ENCODE measurements at regions of chr2 and their contacts with region 1.

Region 1: DNA sequence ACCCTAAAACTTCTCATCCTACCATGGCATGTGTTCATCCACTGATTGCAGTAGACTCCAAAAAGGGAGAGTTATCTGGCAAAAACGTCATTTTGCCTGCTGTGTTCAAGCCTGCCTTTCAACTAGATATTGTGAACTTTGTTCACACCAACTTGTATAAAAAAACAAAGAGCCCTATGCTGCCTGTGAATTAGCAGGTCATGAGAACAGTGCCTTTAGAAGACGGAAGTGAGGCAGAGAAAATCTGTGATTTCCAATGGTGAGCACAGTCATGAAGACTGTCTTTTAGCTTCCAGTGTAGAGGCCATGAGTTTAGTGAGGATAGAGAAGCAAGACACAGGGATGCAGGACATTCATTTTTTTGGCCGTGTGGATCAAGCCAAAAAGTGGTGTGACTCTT is 103.6 kb upstream of the PGAP1 start:
- DNase-seq: no peak
- H3K4me3 ChIP-seq: no peak overlapping the region
- H3K27ac ChIP-seq: no peak overlapping the region
- H3K4me1 ChIP-seq: no peaks in the 10 kb centered on the region
- H3K27me3 ChIP-seq: no peaks in the 10 kb centered on the region
- CTCF ChIP-seq: no peak
- POLR2A ChIP-seq: no peak

Region 2: DNA sequence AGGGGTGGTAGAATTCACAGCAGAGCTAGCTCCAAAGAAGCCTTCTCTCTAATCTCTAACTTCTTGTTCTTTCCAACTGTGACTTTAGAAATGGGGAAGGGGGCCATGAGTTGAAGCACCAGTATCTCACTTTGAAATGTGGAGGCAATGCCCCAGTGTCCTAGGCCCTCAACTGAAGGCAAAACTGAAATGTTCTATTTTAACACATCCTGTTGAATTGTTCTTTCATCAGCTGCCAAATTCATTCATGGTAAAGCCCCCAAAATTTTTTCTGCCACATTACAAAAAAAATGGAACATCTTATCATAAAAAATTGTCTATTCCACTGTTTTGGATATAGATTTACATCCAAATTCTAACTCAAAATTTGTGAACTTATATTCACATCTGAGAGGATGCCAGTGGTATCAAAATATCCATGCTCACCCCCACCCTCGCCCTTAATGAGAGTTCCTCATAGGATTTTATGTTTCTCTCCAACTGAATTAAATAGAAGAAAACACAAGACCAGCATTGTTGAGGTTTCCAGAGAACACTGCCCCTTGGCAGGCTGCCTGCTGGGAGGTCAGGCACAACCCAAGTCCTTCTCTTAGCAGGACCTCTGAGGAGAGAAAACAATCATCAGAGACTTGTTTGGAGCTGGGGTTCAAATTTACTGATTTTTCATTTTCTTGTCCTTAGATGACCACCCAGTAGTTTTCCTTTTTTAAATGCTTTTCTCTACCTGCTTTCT is 43.8 kb after region 1 on chr2:
- intact Hi-C with region 1: loop called (anchors 1 kb)
- DNase-seq: peak in 1 of 2 donors; percentile 20
- H3K4me3 ChIP-seq: no peak overlapping the region
- H3K27ac ChIP-seq: no peak overlapping the region
- H3K4me1 ChIP-seq: no peaks in the 10 kb centered on the region
- H3K27me3 ChIP-seq: no peaks in the 10 kb centered on the region
- CTCF ChIP-seq: no peak
- POLR2A ChIP-seq: no peak

Region 3: GRCh38 chr2:198874472-198874858 is 1844.4 kb after region 1 on chr2:
- intact Hi-C with region 1: no loop called
- DNase-seq: no peak
- H3K4me3 ChIP-seq: no peak overlapping the region
- H3K27ac ChIP-seq: no peak overlapping the region
- H3K4me1 ChIP-seq: no peaks in the 10 kb centered on the region
- H3K27me3 ChIP-seq: no peaks in the 10 kb centered on the region
- CTCF ChIP-seq: no peak
- POLR2A ChIP-seq: no peak

Measured in breast epithelium (tissue), 4 donors.